Activated naive CD8-positive, alpha-beta T cell treated with anti-CD3 and anti-CD28 coated beads, Interleukin-2, amount 10 ng/mL, durations not matched to agents 7 days and 5 days (primary cell): ENCODE measurements at regions of chr1 and their contacts with region 1.

Region 1: DNA sequence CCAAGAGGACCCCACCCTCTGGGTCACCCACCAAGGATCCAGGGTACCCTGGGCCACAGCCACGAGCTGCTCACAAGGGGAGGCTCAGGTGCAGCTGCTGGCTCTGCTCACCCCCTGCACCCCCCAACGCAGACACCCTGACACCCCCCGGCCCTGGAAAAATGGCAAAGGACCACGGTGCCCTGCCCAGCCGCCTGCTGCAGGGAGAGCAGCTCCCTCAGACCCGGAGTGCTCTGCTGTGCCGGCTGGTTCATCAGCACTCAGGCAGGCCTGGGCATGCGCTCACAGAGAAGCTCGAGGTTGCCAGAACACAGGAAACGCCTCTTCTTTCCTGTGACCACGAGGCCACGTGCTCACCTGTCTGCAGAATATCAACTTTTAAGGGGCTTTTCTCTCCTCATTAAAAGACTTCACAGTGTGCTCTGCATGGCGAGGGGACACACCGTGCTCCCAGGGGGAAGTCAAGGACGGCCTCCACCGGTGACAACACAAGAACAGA is 4.3 kb upstream of the C1QTNF12 start:
- DNase-seq: peak; percentile 74
- ATAC-seq: peak; percentile 97
- H3K4me3 Mint-ChIP-seq: peak overlapping the region; percentile 72
- H3K27ac Mint-ChIP-seq: peak overlapping the region; percentile 91
- H3K4me1 Mint-ChIP-seq: peaks cover 13% of the 10 kb centered on the region
- H3K27me3 Mint-ChIP-seq: peaks cover 2% of the 10 kb centered on the region

Region 2: GRCh38 chr1:1122078-1122811 is 128.6 kb before region 1 on chr1:
- POLR2A ChIA-PET with region 1: interaction called, 16 read pairs
- DNase-seq: peak; percentile 93
- ATAC-seq: peak; percentile 92
- H3K4me3 Mint-ChIP-seq: peak overlapping the region; percentile 25
- H3K27ac Mint-ChIP-seq: no peak overlapping the region
- H3K4me1 Mint-ChIP-seq: peaks cover 5% of the 10 kb centered on the region
- H3K27me3 Mint-ChIP-seq: no peaks in the 10 kb centered on the region

Region 3: DNA sequence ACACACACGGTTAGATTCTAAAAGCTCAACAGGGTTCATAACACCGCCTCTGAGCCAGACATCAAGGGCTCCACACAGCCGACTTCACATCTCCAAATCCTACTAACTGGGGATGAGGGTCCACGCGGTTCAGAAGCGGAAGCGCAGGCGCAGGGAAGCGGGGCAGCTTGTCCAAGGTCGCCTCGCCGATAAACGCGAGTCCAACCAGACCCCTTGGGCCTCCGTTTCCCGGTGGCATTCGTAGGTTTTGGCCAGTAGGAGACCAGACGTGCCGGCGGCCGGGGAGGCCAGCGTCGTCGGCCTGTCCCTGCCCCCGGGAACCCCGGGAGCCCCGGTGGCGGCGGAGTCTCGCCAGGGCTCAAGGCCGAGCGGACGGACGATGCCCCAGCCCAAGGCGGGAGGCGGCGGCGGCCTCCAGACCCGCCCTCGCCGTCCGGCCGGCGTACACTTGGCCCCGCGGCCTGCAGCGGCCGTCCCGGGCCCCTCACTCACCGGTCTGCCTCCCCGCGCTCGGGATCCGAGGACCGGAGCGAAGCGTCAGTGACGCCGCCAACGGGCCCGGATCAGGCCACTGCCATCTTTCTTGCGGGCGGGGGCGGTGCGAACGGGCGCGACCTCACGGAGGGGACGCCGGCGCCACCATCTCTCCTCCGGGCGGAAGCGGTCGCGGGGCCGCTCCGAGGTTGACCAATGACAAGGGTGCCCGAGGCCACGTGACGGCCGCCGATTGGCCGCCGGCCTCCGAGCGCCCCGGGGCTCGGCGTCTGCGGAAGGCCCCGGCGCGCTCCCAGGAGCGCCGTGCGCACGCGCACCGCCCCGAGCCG is 19.2 kb before region 1 on chr1 and contains the start of gene SDF4:
- POLR2A ChIA-PET with region 1: interaction called, 18 read pairs
- DNase-seq: peak; percentile 98
- ATAC-seq: peak; percentile 97
- H3K4me3 Mint-ChIP-seq: peak within 1 kb of the TSS; percentile 92
- H3K27ac Mint-ChIP-seq: peak within 1 kb of the TSS; percentile 92
- H3K4me1 Mint-ChIP-seq: peaks cover 25% of the 10 kb centered on the region
- H3K27me3 Mint-ChIP-seq: no peaks in the 10 kb centered on the region
- total RNA-seq, gene SDF4: 99.1 to 103 TPM

Region 4: DNA sequence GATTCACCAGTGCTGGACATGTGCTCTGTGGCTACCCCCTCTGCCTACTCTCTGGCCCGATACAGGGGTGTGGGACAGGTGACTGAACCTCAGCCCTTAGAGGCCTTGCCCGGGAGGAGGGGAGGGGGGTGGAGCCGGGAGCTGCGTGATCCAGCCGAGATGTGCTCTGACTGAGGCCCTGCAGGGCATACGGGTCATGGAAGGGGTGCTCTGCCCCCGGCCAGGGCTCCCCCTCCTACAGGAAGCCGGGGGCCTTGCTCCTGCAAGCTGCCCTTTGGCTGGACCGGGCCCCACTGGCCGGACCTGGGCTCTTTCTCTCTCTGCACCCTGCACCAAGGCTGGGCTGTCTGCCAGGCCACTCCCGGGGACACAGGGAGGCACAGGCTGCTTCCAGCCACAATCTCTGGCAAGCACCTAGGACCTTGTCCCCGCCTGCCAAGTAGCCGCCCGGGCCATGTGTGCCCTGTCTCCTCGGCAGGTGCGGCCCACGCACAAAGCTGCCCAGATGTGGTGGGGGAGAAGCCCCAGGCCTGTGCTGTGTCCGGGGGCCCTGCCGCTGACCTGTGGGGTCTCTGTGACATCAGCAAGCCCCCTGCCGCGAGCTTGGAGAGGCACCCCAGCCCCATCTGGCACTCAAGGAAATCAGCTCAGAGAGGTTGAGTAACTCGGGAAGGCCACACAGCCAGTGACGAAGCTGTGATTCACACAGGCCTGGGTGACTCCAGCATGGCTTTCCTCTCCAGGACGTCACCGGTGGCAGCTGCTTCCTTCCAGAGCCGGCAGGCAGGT is 30.9 kb after region 1 on chr1:
- POLR2A ChIA-PET with region 1: no interaction called
- DNase-seq: no peak
- ATAC-seq: no peak
- H3K4me3 Mint-ChIP-seq: no peak overlapping the region
- H3K27ac Mint-ChIP-seq: no peak overlapping the region
- H3K4me1 Mint-ChIP-seq: peaks cover 2% of the 10 kb centered on the region
- H3K27me3 Mint-ChIP-seq: no peaks in the 10 kb centered on the region